ENCODE measurements at regions of chr1 and their contacts with region 1.

Region 1: GRCh38 chr1:117895482-117896114 is 33.8 kb downstream of the GDAP2 start:
- DNase-seq: peak; percentile 76
- H3K4me3 ChIP-seq: no peak overlapping the region
- H3K27ac ChIP-seq: no peak overlapping the region
- H3K4me1 ChIP-seq: no peaks in the 10 kb centered on the region
- H3K27me3 ChIP-seq: no peaks in the 10 kb centered on the region
- CTCF ChIP-seq: peak; percentile 58 to 68
- POLR2A ChIP-seq: no peak

Region 2: GRCh38 chr1:116521186-116521585 is 1374.4 kb before region 1 on chr1:
- CTCF ChIA-PET with region 1: no interaction called
- POLR2A ChIA-PET with region 1: no interaction called
- dilution Hi-C with region 1: no loop called
- intact Hi-C with region 1: no loop called
- DNase-seq: no peak
- H3K4me3 ChIP-seq: no peak overlapping the region
- H3K27ac ChIP-seq: no peak overlapping the region
- H3K4me1 ChIP-seq: no peaks in the 10 kb centered on the region
- H3K27me3 ChIP-seq: no peaks in the 10 kb centered on the region
- CTCF ChIP-seq: no peak
- POLR2A ChIP-seq: no peak

Region 3: GRCh38 chr1:117512743-117513321 is 382.8 kb before region 1 on chr1:
- CTCF ChIA-PET with region 1: interaction called, 43 read pairs
- POLR2A ChIA-PET with region 1: no interaction called
- dilution Hi-C with region 1: no loop called
- intact Hi-C with region 1: loop called (anchors 2 kb)
- DNase-seq: peak; percentile 41
- H3K4me3 ChIP-seq: no peak overlapping the region
- H3K27ac ChIP-seq: no peak overlapping the region
- H3K4me1 ChIP-seq: no peaks in the 10 kb centered on the region
- H3K27me3 ChIP-seq: no peaks in the 10 kb centered on the region
- CTCF ChIP-seq: peak; percentile 20 to 32
- POLR2A ChIP-seq: no peak

Region 4: GRCh38 chr1:117710710-117711109 is 184.9 kb before region 1 on chr1:
- CTCF ChIA-PET with region 1: interaction called, 8 read pairs
- POLR2A ChIA-PET with region 1: no interaction called
- dilution Hi-C with region 1: no loop called
- intact Hi-C with region 1: loop called (anchors 1 kb)
- DNase-seq: no peak
- H3K4me3 ChIP-seq: no peak overlapping the region
- H3K27ac ChIP-seq: no peak overlapping the region
- H3K4me1 ChIP-seq: no peaks in the 10 kb centered on the region
- H3K27me3 ChIP-seq: peaks cover 4 to 5% of the 10 kb centered on the region in 2 experiments
- CTCF ChIP-seq: peak; percentile 14 to 35
- POLR2A ChIP-seq: no peak

Region 5: DNA sequence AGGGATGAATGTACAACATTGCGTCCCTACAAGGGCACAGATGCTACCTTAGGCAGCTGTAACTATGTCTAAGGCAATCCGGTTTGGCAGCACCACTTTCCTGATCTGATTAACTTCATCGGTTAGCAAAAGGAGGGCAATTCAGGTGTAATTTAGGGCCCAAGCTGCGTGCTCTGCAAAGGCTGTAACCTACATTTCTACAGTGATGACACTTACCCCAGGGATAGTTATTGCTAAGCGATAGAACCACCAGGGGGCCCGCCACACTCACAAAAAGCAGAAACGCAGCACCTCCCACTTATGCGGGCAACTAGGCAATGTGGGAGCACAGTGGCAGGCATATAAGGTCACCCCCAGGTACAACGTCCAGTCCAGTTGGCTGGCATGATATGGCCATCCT is 79.7 kb before region 1 on chr1:
- CTCF ChIA-PET with region 1: interaction called, 74 read pairs
- POLR2A ChIA-PET with region 1: no interaction called
- dilution Hi-C with region 1: no loop called
- intact Hi-C with region 1: loop called (anchors 1 kb)
- DNase-seq: peak; percentile 23
- H3K4me3 ChIP-seq: no peak overlapping the region
- H3K27ac ChIP-seq: no peak overlapping the region
- H3K4me1 ChIP-seq: peaks cover 3% of the 10 kb centered on the region
- H3K27me3 ChIP-seq: peaks cover 0 to 3% of the 10 kb centered on the region in 2 experiments
- CTCF ChIP-seq: peak; percentile 26 to 34
- POLR2A ChIP-seq: no peak

Region 6: GRCh38 chr1:117929173-117929989 is 33.8 kb after region 1 on chr1 and contains the starts of genes GDAP2 and WDR3:
- CTCF ChIA-PET with region 1: interaction called, 10 read pairs
- POLR2A ChIA-PET with region 1: no interaction called
- dilution Hi-C with region 1: no loop called
- intact Hi-C with region 1: no loop called
- DNase-seq: peak; percentile 95
- H3K4me3 ChIP-seq: peak within 1 kb of the TSS; percentile 61 to 93 (median 77)
- H3K27ac ChIP-seq: peak within 1 kb of the TSS; percentile 52
- H3K4me1 ChIP-seq: peaks cover 16% of the 10 kb centered on the region
- H3K27me3 ChIP-seq: no peaks in the 10 kb centered on the region
- CTCF ChIP-seq: no peak
- POLR2A ChIP-seq: no peak
- total RNA-seq, gene GDAP2: 20.7 and 21.5 TPM in 2 replicates
- total RNA-seq, gene WDR3: 27.7 and 29.3 TPM in 2 replicates

Region 7: GRCh38 chr1:118021668-118022067 is 126.1 kb after region 1 on chr1:
- CTCF ChIA-PET with region 1: no interaction called
- POLR2A ChIA-PET with region 1: no interaction called
- dilution Hi-C with region 1: no loop called
- intact Hi-C with region 1: no loop called
- DNase-seq: no peak
- H3K4me3 ChIP-seq: no peak overlapping the region
- H3K27ac ChIP-seq: no peak overlapping the region
- H3K4me1 ChIP-seq: no peaks in the 10 kb centered on the region
- H3K27me3 ChIP-seq: no peaks in the 10 kb centered on the region
- CTCF ChIP-seq: no peak
- POLR2A ChIP-seq: no peak

Region 8: GRCh38 chr1:118589238-118589846 is 693.7 kb after region 1 on chr1:
- CTCF ChIA-PET with region 1: no interaction called
- POLR2A ChIA-PET with region 1: no interaction called
- dilution Hi-C with region 1: no loop called
- intact Hi-C with region 1: no loop called
- DNase-seq: no peak
- H3K4me3 ChIP-seq: no peak overlapping the region
- H3K27ac ChIP-seq: no peak overlapping the region
- H3K4me1 ChIP-seq: no peaks in the 10 kb centered on the region
- H3K27me3 ChIP-seq: no peaks in the 10 kb centered on the region
- CTCF ChIP-seq: no peak
- POLR2A ChIP-seq: no peak